Vagina (tissue), 2 donors: ENCODE measurements at regions of chr10 and their contacts with region 1.

Region 1: DNA sequence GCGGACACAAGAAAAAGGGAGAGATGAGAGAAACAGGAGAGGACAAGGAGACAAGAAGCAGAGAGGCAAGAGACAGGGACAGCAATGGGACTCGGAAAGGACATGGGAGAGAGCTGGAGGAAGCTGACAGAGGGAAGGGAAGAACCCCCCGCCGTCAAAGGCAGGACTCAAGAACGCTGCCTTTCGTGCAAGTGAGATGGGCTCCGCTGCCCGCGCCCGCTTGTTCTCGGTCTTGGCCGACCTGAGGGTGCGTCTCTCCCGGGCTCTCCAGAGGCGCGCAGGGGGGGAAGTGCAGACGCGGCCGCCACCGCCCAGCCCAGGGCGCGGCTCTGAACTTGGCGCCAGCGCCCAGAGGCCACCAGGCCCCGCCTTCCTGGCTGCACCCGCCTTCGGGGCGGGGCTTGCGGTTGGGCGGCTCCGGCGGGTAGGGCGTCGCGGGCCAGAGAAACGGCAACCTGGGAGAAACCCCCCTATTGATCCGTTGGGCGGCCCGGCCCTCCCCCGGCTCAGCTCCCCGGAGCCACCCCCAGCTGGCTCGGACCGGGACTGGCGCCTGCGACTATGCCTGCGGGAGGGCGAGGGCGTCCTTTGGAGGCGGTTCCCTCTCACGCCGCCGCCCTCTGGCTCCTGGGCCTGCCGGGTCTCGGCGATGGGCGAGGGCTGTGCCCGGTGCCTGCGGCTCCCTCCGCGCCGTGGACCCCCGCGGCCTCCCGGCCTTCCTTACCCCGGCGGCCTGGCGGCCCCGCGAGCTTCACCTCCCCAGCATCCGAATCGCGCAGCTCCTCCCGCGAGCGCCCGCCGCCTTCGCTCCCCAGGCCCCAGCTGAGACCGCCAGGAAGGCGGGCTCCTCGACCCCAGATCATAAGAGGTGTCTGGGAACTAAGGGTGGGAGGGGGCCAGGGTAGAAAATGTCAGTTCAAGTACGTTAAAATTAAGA is 2.2 kb upstream of the ANTXRL start:
- DNase-seq: peak in 1 of 2 donors; percentile 95
- H3K4me3 ChIP-seq: peak overlapping the region; percentile 57 to 81
- H3K27ac ChIP-seq: peak overlapping the region; percentile 85
- H3K4me1 ChIP-seq: peaks cover 27% of the 10 kb centered on the region
- H3K27me3 ChIP-seq: no peaks in the 10 kb centered on the region
- CTCF ChIP-seq: no peak
- POLR2A ChIP-seq: no peak

Region 2: GRCh38 chr10:46106410-46107255 is 177.9 kb before region 1 on chr10:
- intact Hi-C with region 1: loop called (anchors 10 kb)
- DNase-seq: peak; percentile 79 to 86
- H3K4me3 ChIP-seq: peak overlapping the region; percentile 45 to 52
- H3K27ac ChIP-seq: no peak overlapping the region
- H3K4me1 ChIP-seq: peaks cover 6% of the 10 kb centered on the region
- H3K27me3 ChIP-seq: no peaks in the 10 kb centered on the region
- CTCF ChIP-seq: no peak
- POLR2A ChIP-seq: no peak

Region 3: DNA sequence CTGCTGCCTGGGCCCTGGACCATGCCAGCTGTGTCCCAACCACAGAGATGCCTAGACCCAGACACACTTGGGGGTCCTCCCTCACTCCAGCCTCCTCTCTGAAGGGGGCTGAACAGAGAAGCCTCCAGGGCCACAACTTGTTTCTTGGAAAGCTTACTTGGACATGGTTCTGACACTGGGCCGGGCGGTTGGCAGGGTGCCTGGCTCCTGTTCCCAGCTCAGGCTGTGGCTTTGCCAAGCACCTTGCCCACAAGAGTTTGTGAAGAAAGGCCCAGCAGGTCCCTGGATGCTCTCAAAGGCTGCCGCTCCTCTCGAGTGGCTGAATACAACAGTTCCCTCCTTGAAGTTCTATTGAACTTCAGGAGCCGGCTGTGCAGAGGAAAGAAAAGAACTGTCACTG is 808.3 kb after region 1 on chr10:
- intact Hi-C with region 1: no loop called
- DNase-seq: peak in 1 of 2 donors; percentile 81
- H3K4me3 ChIP-seq: no peak overlapping the region
- H3K27ac ChIP-seq: no peak overlapping the region
- H3K4me1 ChIP-seq: no peaks in the 10 kb centered on the region
- H3K27me3 ChIP-seq: no peaks in the 10 kb centered on the region
- CTCF ChIP-seq: no peak
- POLR2A ChIP-seq: no peak

Region 4: DNA sequence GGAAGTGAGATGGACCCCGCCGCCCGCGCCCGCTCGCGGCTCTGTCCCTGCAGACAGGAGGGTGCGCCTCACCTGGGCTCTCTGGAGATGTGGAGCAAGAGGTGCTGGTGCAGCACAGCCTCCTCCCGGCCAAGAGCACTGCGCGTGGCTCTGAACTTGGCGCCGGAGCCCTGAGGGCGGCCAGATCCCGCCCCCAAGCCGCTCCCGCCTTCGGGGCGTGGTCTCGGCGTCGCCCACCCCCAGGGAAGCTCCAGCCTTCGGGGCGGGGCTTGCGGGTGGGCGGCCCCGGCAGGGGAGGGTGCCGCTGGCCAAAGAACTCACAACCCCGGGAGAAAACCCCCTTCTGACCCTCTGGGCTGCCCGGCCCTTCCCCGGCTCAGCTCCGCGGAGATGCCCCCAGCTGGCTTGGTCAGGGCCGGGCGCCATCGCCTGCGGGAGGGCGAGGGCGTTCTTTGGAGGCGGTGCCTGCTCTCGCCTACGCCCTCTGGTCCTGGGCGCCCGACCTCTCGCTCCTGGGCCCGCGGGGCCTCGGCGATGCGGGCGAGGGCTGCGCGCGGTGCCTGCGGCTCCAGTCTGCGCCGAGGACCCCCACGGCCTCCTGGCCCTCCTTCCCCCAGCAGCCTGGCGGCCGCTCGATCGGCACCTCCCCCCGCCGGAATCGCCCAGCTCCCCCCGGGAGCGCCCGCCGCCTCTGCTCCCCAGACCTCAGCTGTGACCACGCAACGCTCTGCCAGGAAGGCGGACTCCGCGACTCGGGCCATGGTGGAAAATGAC is 1099.8 kb after region 1 on chr10 and contains the start of gene ZNF488:
- intact Hi-C with region 1: loop called (anchors 5 kb)
- DNase-seq: peak; percentile 90 to 94
- H3K4me3 ChIP-seq: peak within 1 kb of the TSS; percentile 67 to 79
- H3K27ac ChIP-seq: peak within 1 kb of the TSS; percentile 79
- H3K4me1 ChIP-seq: peaks cover 6% of the 10 kb centered on the region
- H3K27me3 ChIP-seq: no peaks in the 10 kb centered on the region
- CTCF ChIP-seq: no peak
- POLR2A ChIP-seq: no peak
- total RNA-seq, gene ZNF488: not detected